Mammary epithelial cell (primary cell): ENCODE measurements at regions of chr6 and their contacts with region 1.

Region 1: DNA sequence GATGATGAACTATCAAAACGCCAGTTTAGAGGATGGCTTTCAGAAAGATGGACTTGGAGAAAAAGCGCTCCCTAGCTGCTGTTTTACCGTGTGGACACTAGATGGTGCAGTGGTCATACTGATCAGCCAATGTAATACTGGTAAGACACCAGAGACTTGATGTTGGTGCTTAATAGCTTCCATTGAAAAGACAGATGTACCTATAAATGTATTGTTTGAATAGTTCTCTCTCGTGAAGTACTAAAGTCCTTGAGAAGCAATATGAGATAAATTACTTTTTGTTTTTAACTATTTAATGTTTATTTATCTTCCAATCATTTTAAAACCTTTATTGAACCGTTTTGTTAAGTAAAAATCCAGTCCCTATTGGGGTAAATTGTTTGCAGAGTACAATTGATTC is 63.9 kb upstream of the FUCA2 start:
- DNase-seq: peak; percentile 61
- H3K4me3 ChIP-seq: no peak overlapping the region
- H3K27ac ChIP-seq: no peak overlapping the region
- H3K4me1 ChIP-seq: peaks cover 6% of the 10 kb centered on the region
- H3K27me3 ChIP-seq: no peaks in the 10 kb centered on the region
- CTCF ChIP-seq: peak; percentile 78 to 80

Region 2: DNA sequence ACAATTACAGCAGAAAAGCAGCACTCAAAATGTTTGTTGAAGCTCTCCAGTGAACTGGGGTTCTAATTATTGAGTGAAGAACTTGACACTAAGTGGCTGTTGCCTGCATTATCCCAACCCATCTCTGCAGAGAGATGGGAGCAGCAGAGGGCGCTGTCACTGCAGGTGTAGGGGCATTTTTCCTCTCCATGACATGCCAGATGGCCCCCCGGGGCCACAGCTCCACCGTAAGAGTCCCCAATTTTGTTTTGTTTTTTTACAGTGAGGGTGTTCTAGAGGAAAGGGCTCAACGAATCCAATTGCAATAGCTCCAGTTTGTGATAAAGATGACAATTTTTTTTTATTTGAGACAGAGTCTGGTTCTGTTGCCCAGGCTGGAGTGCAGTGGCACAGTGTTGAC is 62.0 kb before region 1 on chr6:
- CTCF ChIA-PET with region 1: interaction called, 4 read pairs
- dilution Hi-C with region 1: no loop called
- in situ Hi-C with region 1: no loop called
- intact Hi-C with region 1: loop called (anchors 1 kb)
- DNase-seq: no peak
- H3K4me3 ChIP-seq: no peak overlapping the region
- H3K27ac ChIP-seq: no peak overlapping the region
- H3K4me1 ChIP-seq: peaks cover 13% of the 10 kb centered on the region
- H3K27me3 ChIP-seq: peaks cover 2% of the 10 kb centered on the region
- CTCF ChIP-seq: peak; percentile 21 to 58

Region 3: GRCh38 chr6:143842902-143843676 is 267.6 kb after region 1 on chr6 and contains the start of gene LTV1:
- CTCF ChIA-PET with region 1: interaction called, 4 read pairs
- dilution Hi-C with region 1: no loop called
- in situ Hi-C with region 1: loop called in 1 of 2 experiments (anchors 5 kb)
- intact Hi-C with region 1: loop called (anchors 2 kb)
- DNase-seq: peak; percentile 92
- H3K4me3 ChIP-seq: peak within 1 kb of the TSS; percentile 68 to 96 (median 74)
- H3K27ac ChIP-seq: peak within 1 kb of the TSS; percentile 94
- H3K4me1 ChIP-seq: peaks cover 6% of the 10 kb centered on the region
- H3K27me3 ChIP-seq: no peaks in the 10 kb centered on the region
- CTCF ChIP-seq: no peak
- total RNA-seq, gene LTV1: 11.8 to 34.2 TPM

Region 4: GRCh38 chr6:143940011-143940597 is 364.7 kb after region 1 on chr6:
- CTCF ChIA-PET with region 1: no interaction called
- dilution Hi-C with region 1: no loop called
- in situ Hi-C with region 1: no loop called
- intact Hi-C with region 1: loop called (anchors 1 kb)
- DNase-seq: peak; percentile 48
- H3K4me3 ChIP-seq: no peak overlapping the region
- H3K27ac ChIP-seq: no peak overlapping the region
- H3K4me1 ChIP-seq: no peaks in the 10 kb centered on the region
- H3K27me3 ChIP-seq: no peaks in the 10 kb centered on the region
- CTCF ChIP-seq: peak; percentile 88

Region 5: DNA sequence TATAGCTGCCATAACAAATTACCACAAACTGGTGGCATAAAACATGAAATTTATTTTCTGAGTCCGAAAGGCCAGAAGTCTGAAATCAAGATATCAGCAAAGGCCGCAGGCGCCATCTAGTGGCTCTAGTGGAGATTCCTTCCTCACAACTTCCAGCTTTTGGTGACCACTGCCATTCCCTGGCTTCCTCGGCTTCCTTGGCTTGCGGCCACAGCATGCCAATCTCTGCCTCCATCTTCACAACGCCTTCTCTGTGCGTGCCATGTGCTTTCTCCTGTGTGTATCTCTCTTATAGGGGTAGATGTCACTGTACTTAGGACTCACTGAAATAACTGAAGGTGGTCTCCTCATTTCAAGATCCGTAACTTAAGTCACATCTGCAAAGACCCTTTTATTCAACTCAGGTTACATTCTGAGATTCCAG is 438.1 kb after region 1 on chr6:
- CTCF ChIA-PET with region 1: no interaction called
- dilution Hi-C with region 1: no loop called
- in situ Hi-C with region 1: loop called (anchors 5 kb)
- intact Hi-C with region 1: loop called (anchors 1 kb)
- DNase-seq: peak; percentile 56
- H3K4me3 ChIP-seq: no peak overlapping the region
- H3K27ac ChIP-seq: no peak overlapping the region
- H3K4me1 ChIP-seq: no peaks in the 10 kb centered on the region
- H3K27me3 ChIP-seq: peaks cover 2% of the 10 kb centered on the region
- CTCF ChIP-seq: peak; percentile 88 to 89

Region 6: GRCh38 chr6:144215932-144216667 is 640.7 kb after region 1 on chr6:
- CTCF ChIA-PET with region 1: no interaction called
- dilution Hi-C with region 1: no loop called
- in situ Hi-C with region 1: no loop called
- intact Hi-C with region 1: loop called (anchors 1 kb)
- DNase-seq: peak; percentile 94
- H3K4me3 ChIP-seq: peak overlapping the region; percentile 54 to 72 (median 65)
- H3K27ac ChIP-seq: peak overlapping the region; percentile 63
- H3K4me1 ChIP-seq: peaks cover 13% of the 10 kb centered on the region
- H3K27me3 ChIP-seq: no peaks in the 10 kb centered on the region
- CTCF ChIP-seq: peak; percentile 35 to 69